T-cell (primary cell): ENCODE measurements at regions of chr6 and their contacts with region 1.

Region 1: GRCh38 chr6:28838634-28839442 is 84.9 kb downstream of the TRIM27 start:
- DNase-seq: peak; percentile 50 to 88 (median 72)
- ATAC-seq: peak; percentile 75 to 82 (median 78)
- H3K4me3 ChIP-seq: peak overlapping the region; percentile 82 to 94
- H3K4me3 Mint-ChIP-seq: peak overlapping the region; percentile 92 to 94 (median 94)
- H3K27ac ChIP-seq: peak overlapping the region; percentile 60
- H3K27ac Mint-ChIP-seq: peak overlapping the region; percentile 87 to 89
- H3K4me1 ChIP-seq: peaks cover 12 to 17% of the 10 kb centered on the region in 2 experiments
- H3K4me1 Mint-ChIP-seq: peaks cover 14 to 29% (median 22%) of the 10 kb centered on the region in 3 donors
- H3K27me3 ChIP-seq: peaks cover 2 to 13% of the 10 kb centered on the region in 2 experiments
- H3K27me3 Mint-ChIP-seq: peaks cover 19 to 32% of the 10 kb centered on the region in 2 donors

Region 2: DNA sequence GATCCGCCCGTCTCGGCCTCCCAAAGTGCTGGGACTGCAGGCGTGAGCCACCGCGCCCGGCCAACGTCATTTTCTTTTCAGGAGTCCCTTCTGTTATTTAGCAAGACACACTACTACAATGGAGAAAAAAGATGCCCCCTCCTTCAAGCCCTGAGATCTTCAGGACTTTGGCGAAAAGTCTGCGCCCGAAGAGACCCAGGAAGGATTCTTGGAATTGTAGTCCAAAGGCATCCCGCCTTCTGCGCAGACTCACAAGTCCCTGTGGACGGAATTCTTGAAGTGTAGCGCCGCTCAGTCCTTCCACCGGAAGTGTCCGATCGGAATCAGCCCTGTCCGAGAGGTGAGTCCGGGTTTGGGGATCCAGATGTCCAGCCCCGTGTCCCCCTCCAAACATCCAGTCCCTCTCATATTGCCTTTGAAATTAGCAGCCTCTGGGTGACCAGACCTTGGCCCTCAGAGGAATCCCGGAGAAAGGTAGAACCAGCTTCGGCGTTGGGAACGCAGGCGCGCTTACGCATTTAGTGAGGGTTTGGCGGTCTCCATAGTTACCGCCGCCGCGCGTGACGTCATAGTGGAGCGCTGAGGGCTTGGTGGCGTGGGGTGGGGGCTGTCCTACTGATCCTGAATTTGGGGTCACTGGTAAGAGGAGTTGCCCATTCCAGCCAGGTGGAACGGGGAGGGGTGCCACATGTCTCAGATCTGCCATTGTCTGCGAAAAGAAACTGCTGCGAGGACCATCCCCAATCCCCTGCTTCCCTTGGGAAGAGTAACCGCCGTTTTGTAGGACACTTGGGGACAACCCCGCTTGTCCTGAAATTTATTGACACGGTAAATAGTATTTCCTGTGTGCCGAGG is 758.0 kb before region 1 on chr6:
- CTCF ChIA-PET with region 1: no interaction called
- POLR2A ChIA-PET with region 1: no interaction called
- DNase-seq: peak; percentile 72 to 96 (median 89)
- ATAC-seq: peak; percentile 82 to 86 (median 84)
- H3K4me3 ChIP-seq: peak overlapping the region; percentile 80 to 98
- H3K4me3 Mint-ChIP-seq: peak overlapping the region; percentile 84 to 98 (median 97)
- H3K27ac ChIP-seq: peak overlapping the region; percentile 86
- H3K27ac Mint-ChIP-seq: peak overlapping the region; percentile 90 to 98
- H3K4me1 ChIP-seq: peaks cover 2 to 16% of the 10 kb centered on the region in 2 experiments
- H3K4me1 Mint-ChIP-seq: peaks cover 22 to 41% (median 25%) of the 10 kb centered on the region in 3 donors
- H3K27me3 ChIP-seq: no peaks in the 10 kb centered on the region
- H3K27me3 Mint-ChIP-seq: no peaks in the 10 kb centered on the region

Region 3: GRCh38 chr6:28565823-28566526 is 272.9 kb before region 1 on chr6:
- CTCF ChIA-PET with region 1: no interaction called
- POLR2A ChIA-PET with region 1: no interaction called
- DNase-seq: no peak
- ATAC-seq: no peak
- H3K4me3 ChIP-seq: no peak overlapping the region
- H3K4me3 Mint-ChIP-seq: no peak overlapping the region
- H3K27ac ChIP-seq: no peak overlapping the region
- H3K27ac Mint-ChIP-seq: no peak overlapping the region
- H3K4me1 ChIP-seq: no peaks in the 10 kb centered on the region
- H3K4me1 Mint-ChIP-seq: no peaks in the 10 kb centered on the region
- H3K27me3 ChIP-seq: peaks cover 4 to 20% of the 10 kb centered on the region in 2 experiments
- H3K27me3 Mint-ChIP-seq: peaks cover 41 to 49% of the 10 kb centered on the region in 2 donors

Region 4: DNA sequence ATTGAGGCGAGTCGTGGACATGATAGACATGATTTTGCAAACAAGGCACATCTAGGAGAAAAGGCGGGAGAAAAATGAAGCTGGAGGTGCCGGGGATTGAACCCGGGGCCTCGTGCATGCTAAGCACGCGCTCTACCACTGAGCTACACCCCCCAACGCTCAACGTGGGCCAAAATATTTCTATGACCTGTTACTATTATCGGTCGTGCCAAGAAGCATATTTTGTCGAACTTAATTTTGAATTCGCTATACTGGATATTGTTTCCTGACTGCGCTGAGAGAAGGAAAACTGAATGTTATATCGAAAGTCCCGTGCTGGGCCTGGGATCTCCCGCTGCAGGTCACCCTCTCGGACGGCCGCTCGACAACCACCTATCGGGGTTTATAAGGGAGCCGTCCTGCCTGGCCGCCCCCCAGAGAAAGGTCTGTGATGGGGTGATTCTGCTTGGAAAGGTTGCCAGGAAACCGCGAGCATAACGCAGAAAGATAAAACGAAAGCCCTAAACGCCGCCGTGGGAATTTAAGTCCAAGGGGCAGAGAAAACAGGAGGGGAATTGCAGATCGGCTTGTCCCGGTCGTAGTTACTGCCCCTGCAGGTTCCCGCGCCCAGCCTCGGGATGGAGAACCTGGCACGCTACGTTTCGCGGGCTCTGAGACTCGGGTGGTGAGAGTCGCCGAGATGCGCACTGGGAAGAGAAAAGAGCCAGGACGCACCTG is 24.9 kb after region 1 on chr6:
- CTCF ChIA-PET with region 1: interaction called, 4 to 19 read pairs
- POLR2A ChIA-PET with region 1: interaction called, 3 to 5 read pairs
- DNase-seq: peak; percentile 58 to 92 (median 77)
- ATAC-seq: peak; percentile 26 to 52 (median 34)
- H3K4me3 ChIP-seq: peak overlapping the region; percentile 75 to 92
- H3K4me3 Mint-ChIP-seq: peak overlapping the region; percentile 87 to 98 (median 90)
- H3K27ac ChIP-seq: peak overlapping the region; percentile 57
- H3K27ac Mint-ChIP-seq: peak overlapping the region; percentile 94 to 95
- H3K4me1 ChIP-seq: peaks cover 10 to 31% of the 10 kb centered on the region in 2 experiments
- H3K4me1 Mint-ChIP-seq: peaks cover 45 to 50% (median 50%) of the 10 kb centered on the region in 3 donors
- H3K27me3 ChIP-seq: no peaks in the 10 kb centered on the region
- H3K27me3 Mint-ChIP-seq: peaks cover 0 to 5% of the 10 kb centered on the region in 2 donors

Region 5: DNA sequence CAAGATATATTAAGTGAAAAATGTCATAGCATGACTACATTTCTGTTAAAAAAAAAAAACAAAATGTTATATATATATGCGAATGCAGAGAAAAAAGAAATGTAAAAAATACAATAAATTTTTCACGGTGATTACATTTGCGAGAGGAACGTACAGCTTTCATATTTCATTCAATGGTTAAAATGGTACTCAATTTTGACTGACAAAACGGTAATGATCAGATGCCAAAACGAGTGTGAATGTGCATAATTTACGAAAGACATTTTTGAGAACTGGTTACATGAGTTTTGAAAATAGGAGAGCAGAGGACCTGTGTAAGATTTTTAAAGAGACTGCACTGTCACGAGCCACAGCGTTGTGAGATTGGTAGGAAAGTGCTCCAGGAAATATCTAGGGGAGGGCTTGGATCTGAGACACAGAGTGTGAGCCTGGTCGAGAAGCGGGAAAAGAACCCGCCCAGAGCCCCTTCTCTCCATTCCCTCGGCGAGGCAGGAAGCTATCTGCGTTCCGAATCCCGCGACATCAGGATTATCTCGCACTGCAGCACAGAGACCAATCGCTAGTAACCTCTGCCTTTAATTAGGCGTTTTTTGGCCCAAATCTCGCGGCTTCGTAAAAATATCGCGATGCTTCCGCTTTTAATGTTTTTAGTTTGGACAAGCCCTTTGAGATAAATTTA is 56.4 kb after region 1 on chr6:
- CTCF ChIA-PET with region 1: interaction called in 1 of 2 experiments, 26 read pairs
- POLR2A ChIA-PET with region 1: interaction called in 1 of 2 experiments, 3 read pairs
- DNase-seq: peak; percentile 79 to 96 (median 89)
- ATAC-seq: peak; percentile 75 to 77 (median 77)
- H3K4me3 ChIP-seq: peak overlapping the region; percentile 67 to 93
- H3K4me3 Mint-ChIP-seq: peak overlapping the region; percentile 97 to 99 (median 98)
- H3K27ac ChIP-seq: peak overlapping the region; percentile 97
- H3K27ac Mint-ChIP-seq: peak overlapping the region; percentile 99 to 100
- H3K4me1 ChIP-seq: peaks cover 10 to 13% of the 10 kb centered on the region in 2 experiments
- H3K4me1 Mint-ChIP-seq: peaks cover 15 to 29% (median 21%) of the 10 kb centered on the region in 3 donors
- H3K27me3 ChIP-seq: no peaks in the 10 kb centered on the region
- H3K27me3 Mint-ChIP-seq: peaks cover 0 to 4% of the 10 kb centered on the region in 2 donors

Region 6: DNA sequence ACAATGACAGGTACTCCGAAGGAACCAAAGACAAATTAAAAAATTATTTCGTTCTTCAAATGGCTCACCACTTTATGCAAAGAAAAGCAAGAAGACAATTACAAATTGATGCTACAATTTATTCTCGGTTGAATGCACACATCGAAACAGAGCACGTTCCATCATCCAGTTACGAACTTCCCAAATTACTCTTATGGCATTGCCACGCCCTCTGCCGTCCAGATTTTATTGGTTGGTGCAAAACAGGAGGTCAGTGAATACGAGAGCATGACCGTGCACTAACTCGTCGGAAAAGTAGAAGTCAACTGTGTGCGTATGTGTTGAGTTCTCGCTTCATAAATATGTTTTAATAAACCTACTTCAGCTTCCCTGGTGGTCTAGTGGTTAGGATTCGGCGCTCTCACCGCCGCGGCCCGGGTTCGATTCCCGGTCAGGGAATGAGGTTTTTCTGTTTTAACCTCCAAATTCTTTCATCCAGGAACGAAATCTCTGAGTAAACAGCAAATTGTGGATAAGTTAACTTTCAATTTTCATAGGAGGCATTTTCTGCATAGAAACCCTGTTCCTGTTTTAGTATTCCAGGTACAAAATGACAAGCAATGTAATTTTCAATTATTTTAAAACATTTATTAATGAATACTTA is 143.1 kb after region 1 on chr6:
- CTCF ChIA-PET with region 1: interaction called, 5 to 31 read pairs
- POLR2A ChIA-PET with region 1: no interaction called
- DNase-seq: peak; percentile 28 to 86 (median 61)
- ATAC-seq: peak; percentile 63 to 70 (median 65)
- H3K4me3 ChIP-seq: peak overlapping the region; percentile 83 to 98
- H3K4me3 Mint-ChIP-seq: peak overlapping the region; percentile 75 to 96 (median 81)
- H3K27ac ChIP-seq: peak overlapping the region; percentile 64
- H3K27ac Mint-ChIP-seq: peak overlapping the region; percentile 88 to 94
- H3K4me1 ChIP-seq: peaks cover 8 to 31% of the 10 kb centered on the region in 2 experiments
- H3K4me1 Mint-ChIP-seq: peaks cover 44 to 65% (median 59%) of the 10 kb centered on the region in 3 donors
- H3K27me3 ChIP-seq: peaks cover 3 to 25% of the 10 kb centered on the region in 2 experiments
- H3K27me3 Mint-ChIP-seq: peaks cover 14 to 37% of the 10 kb centered on the region in 2 donors